IMR-90 (cell line): ENCODE measurements at regions of chr1 and their contacts with region 1.

Region 1: DNA sequence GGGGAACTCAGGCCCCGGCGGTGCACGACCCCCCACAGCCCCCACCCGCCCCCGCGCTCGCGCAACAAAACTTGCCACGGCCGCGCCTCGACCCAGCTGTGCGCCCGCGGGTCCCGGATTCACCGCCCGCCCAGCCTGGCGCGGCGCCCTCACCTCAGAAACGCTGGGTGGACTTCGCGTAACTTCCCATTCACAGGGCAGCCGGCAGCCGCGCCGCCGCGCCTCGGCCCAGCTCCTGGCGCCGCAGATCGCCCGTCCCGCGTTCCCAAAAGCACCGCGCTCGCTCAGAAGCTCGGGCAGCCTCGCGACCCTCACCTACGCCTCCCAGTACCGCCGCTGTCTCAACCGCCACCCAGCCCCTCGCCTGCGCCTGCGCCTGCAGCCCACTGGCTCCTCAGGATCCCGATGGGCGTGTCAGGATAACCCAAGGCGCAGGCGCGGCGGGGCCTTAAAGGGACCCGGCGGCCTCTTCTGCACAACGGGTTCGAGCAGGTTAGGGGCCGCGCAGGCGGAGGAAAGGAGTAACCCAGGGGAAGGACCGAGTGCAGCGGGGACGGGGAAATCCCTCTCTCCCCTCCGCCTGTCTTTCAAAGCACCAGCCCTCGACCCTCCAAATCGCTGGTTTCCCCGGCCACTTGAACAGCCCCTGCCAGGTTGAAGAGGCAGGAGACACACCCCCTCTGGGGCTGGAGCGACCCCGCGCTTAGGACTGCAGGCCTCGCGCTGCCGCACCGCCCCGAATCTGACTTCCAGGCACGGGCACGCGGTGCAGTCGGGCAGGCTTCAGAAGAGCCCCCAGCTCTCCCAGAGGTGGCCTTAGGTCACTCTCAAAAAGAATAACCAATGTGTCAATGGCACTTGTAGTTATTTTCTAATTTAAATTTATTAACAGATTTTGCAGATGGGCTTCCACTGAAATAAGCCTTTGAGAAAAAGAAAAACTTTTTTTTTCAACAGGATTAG is at the start of gene NBPF1:
- DNase-seq: peak; percentile 94
- ATAC-seq: peak; percentile 99
- H3K4me3 ChIP-seq: peak within 1 kb of the TSS; percentile 56
- H3K27ac ChIP-seq: peak within 1 kb of the TSS; percentile 72
- H3K4me1 ChIP-seq: peaks cover 3% of the 10 kb centered on the region; the same call in 1 of the 2 replicates
- H3K27me3 ChIP-seq: no peaks in the 10 kb centered on the region
- CTCF ChIP-seq: no peak
- POLR2A ChIP-seq: peak; percentile 66
- RAD21 ChIP-seq: peak; percentile 21; the same call in 1 of the 2 replicates
- total RNA-seq, gene NBPF1: 25.3 and 28.3 TPM in 2 replicates

Region 2: GRCh38 chr1:16474166-16474800 is 139.2 kb before region 1 on chr1:
- CTCF ChIA-PET with region 1: no interaction called
- POLR2A ChIA-PET with region 1: no interaction called
- dilution Hi-C with region 1: no loop called
- in situ Hi-C with region 1: no loop called
- intact Hi-C with region 1: no loop called
- DNase-seq: no peak
- ATAC-seq: no peak
- H3K4me3 ChIP-seq: no peak overlapping the region
- H3K27ac ChIP-seq: no peak overlapping the region
- H3K4me1 ChIP-seq: no peaks in the 10 kb centered on the region
- H3K27me3 ChIP-seq: no peaks in the 10 kb centered on the region
- CTCF ChIP-seq: no peak
- POLR2A ChIP-seq: no peak
- RAD21 ChIP-seq: no peak

Region 3: GRCh38 chr1:16625497-16626408 is 12.3 kb after region 1 on chr1:
- CTCF ChIA-PET with region 1: interaction called, 21 read pairs
- POLR2A ChIA-PET with region 1: interaction called, 5 read pairs
- dilution Hi-C with region 1: no loop called
- in situ Hi-C with region 1: no loop called
- intact Hi-C with region 1: no loop called
- DNase-seq: no peak
- ATAC-seq: no peak
- H3K4me3 ChIP-seq: no peak overlapping the region
- H3K27ac ChIP-seq: no peak overlapping the region
- H3K4me1 ChIP-seq: no peaks in the 10 kb centered on the region
- H3K27me3 ChIP-seq: no peaks in the 10 kb centered on the region
- CTCF ChIP-seq: no peak
- POLR2A ChIP-seq: no peak
- RAD21 ChIP-seq: no peak

Region 4: DNA sequence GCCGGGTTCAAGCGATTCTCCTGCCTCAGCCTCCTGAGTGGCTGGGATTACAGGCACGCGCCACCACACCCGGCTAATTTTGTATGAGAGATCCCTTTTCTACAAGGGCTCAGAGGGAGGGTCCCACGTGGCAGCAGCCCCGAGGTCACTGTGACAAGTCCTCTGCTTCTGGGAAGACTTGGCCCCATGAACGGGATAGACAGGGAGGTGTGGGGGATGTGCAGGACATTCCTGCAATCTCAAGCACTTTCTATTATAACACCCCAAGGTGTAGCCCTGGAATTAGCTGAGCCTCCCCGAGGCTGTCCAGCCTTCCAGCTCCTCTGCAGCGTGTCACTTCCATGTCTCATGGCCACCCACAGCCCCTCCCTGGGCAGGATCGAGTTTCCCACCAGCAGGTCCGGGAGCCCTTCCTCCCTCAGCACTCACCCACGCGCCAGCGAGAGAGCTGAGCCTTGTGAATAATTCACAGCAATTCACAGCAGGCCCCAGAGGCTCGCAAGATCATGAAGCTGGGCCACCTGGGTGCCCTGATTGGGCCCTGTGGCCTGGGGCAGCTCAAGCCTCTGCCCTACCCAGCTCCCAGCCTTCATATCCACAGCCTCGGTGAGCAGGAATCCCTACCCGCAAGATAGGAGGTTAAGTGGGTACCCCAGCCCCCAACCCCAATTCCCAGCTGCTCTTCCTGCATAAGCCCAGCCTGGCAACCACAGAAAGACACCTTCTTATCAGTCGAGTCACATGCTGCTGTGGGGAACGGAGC is 104.1 kb after region 1 on chr1:
- CTCF ChIA-PET with region 1: no interaction called
- POLR2A ChIA-PET with region 1: interaction called, 17 read pairs
- dilution Hi-C with region 1: no loop called
- in situ Hi-C with region 1: no loop called
- intact Hi-C with region 1: no loop called
- DNase-seq: no peak
- ATAC-seq: peak; percentile 63
- H3K4me3 ChIP-seq: no peak overlapping the region
- H3K27ac ChIP-seq: no peak overlapping the region
- H3K4me1 ChIP-seq: no peaks in the 10 kb centered on the region
- H3K27me3 ChIP-seq: peaks cover 56% of the 10 kb centered on the region
- CTCF ChIP-seq: no peak
- POLR2A ChIP-seq: no peak
- RAD21 ChIP-seq: no peak

Region 5: DNA sequence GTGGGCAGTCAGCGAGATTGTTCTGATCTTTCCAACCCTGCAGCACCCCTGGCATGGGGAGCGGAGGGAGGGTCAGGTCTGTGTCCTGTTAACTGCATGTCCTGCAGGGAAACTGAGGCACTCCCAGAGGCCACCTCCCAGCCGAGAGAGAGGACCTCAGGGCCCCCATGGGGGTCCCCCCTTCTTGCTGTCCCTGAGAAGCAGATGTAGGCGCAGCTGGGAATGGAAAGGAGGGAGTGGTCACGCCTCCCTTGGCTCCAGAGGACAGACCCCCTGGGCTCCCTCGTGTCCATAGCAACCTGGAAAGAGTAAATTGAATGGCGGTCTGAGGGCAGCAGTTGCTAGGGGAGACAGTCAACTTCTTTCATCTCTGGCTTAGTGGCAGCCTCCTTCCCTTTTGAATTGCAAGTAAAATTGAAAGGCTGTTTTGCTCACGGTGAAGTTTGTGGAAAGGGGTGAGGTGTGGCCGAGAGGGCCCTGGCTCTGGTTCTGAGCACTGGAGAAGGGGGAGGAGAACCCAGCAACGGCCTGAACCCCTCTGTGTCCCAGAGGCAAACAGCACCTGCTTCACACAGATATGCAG is 313.1 kb after region 1 on chr1:
- CTCF ChIA-PET with region 1: no interaction called
- POLR2A ChIA-PET with region 1: interaction called, 5 read pairs
- dilution Hi-C with region 1: no loop called
- in situ Hi-C with region 1: no loop called
- intact Hi-C with region 1: loop called (anchors 5 kb)
- DNase-seq: no peak
- ATAC-seq: no peak
- H3K4me3 ChIP-seq: no peak overlapping the region
- H3K27ac ChIP-seq: no peak overlapping the region
- H3K4me1 ChIP-seq: peaks cover 3% of the 10 kb centered on the region; the same call in 1 of the 2 replicates
- H3K27me3 ChIP-seq: no peaks in the 10 kb centered on the region; the same call in 1 of the 2 replicates
- CTCF ChIP-seq: no peak
- POLR2A ChIP-seq: no peak
- RAD21 ChIP-seq: no peak

Region 6: DNA sequence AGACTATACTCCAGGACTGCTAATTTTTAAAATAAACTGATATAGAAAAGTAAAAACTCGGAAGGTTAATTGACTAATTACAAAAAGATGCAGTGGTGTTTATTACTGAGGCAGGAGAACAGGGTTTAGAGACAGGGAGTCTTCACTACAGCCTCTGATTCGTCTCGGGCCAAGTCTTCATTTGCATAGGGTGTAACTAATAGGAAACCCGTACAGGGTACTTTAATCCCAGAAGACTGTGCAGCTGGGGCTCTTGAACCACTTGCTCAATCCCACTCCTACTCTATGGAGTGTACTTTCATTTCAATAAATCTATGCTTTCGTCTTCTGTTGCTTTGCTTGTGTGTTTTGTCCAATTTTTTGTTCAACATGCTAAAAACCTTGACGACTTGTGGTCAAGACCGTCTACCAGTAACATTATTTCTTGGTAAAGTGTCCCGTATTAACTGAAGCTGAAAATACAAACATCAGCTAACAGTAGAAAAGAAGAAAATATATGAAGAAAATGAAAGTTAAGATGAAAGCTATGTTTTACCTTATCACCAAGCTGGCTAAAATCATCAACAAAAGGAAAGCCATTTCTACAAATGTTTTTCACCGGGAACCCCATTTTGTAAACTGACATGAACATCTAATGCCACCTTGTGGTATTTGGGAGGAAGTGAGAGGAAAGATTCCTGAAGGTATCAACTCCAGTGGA is 432.3 kb after region 1 on chr1:
- CTCF ChIA-PET with region 1: no interaction called
- POLR2A ChIA-PET with region 1: no interaction called
- dilution Hi-C with region 1: no loop called
- in situ Hi-C with region 1: loop called (anchors 25 kb)
- intact Hi-C with region 1: no loop called
- DNase-seq: peak; percentile 72
- ATAC-seq: peak; percentile 78
- H3K4me3 ChIP-seq: no peak overlapping the region
- H3K27ac ChIP-seq: no peak overlapping the region
- H3K4me1 ChIP-seq: no peaks in the 10 kb centered on the region
- H3K27me3 ChIP-seq: no peaks in the 10 kb centered on the region
- CTCF ChIP-seq: peak; percentile 78
- POLR2A ChIP-seq: no peak
- RAD21 ChIP-seq: peak; percentile 79